ENCODE measurements at regions of chr14 and their contacts with region 1.

Region 1: GRCh38 chr14:22570132-22570949 is 18.7 kb downstream of the DAD1 start:
- DNase-seq: peak; percentile 91
- H3K4me3 Mint-ChIP-seq: peak overlapping the region; percentile 80
- H3K27ac Mint-ChIP-seq: peak overlapping the region; percentile 99
- H3K4me1 Mint-ChIP-seq: peaks cover 74% of the 10 kb centered on the region
- H3K27me3 Mint-ChIP-seq: no peaks in the 10 kb centered on the region

Region 2: GRCh38 chr14:21964180-21964579 is 606.2 kb before region 1 on chr14:
- CTCF ChIA-PET with region 1: interaction called, 10 read pairs
- POLR2A ChIA-PET with region 1: no interaction called
- intact Hi-C with region 1: no loop called
- DNase-seq: no peak
- H3K4me3 Mint-ChIP-seq: no peak overlapping the region
- H3K27ac Mint-ChIP-seq: peak overlapping the region; percentile 4
- H3K4me1 Mint-ChIP-seq: peaks cover 17% of the 10 kb centered on the region
- H3K27me3 Mint-ChIP-seq: no peaks in the 10 kb centered on the region

Region 3: DNA sequence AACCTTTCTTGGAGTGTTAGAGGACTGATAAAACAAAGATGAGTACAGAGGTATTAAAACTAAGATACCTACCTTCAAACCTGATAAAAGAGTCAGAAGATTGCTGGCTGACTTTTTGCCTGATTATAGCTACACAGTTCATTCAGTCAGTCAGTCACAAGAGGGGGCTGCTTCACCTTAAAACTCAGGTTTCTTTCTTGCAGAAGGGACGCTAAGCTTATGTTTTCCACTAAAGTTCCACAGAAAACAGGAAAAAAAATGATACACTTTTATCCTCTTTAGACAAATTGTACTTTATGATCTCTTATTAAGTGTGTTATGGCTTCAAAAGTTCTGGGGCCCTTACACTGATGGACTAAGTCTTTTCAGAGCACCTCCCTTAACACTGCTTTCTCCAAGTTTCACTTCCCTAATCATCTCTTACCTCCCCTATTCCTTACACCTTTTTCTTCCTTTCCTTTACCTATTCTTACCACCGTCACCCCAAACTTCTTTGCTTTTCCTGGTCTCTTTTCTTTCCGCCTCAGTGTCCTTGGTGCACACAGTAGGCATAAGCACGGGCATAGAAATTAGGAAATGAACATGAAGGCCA is 448.0 kb before region 1 on chr14:
- CTCF ChIA-PET with region 1: interaction called, 11 read pairs
- POLR2A ChIA-PET with region 1: interaction called, 4 read pairs
- intact Hi-C with region 1: no loop called
- DNase-seq: no peak
- H3K4me3 Mint-ChIP-seq: peak overlapping the region; percentile 62
- H3K27ac Mint-ChIP-seq: peak overlapping the region; percentile 89
- H3K4me1 Mint-ChIP-seq: peaks cover 9% of the 10 kb centered on the region
- H3K27me3 Mint-ChIP-seq: no peaks in the 10 kb centered on the region

Region 4: GRCh38 chr14:22531451-22532344 is 38.6 kb before region 1 on chr14:
- CTCF ChIA-PET with region 1: interaction called, 24 read pairs
- POLR2A ChIA-PET with region 1: interaction called, 98 read pairs
- intact Hi-C with region 1: no loop called
- DNase-seq: peak; percentile 66
- H3K4me3 Mint-ChIP-seq: peak overlapping the region; percentile 74
- H3K27ac Mint-ChIP-seq: peak overlapping the region; percentile 99
- H3K4me1 Mint-ChIP-seq: peaks cover 88% of the 10 kb centered on the region
- H3K27me3 Mint-ChIP-seq: no peaks in the 10 kb centered on the region

Region 5: DNA sequence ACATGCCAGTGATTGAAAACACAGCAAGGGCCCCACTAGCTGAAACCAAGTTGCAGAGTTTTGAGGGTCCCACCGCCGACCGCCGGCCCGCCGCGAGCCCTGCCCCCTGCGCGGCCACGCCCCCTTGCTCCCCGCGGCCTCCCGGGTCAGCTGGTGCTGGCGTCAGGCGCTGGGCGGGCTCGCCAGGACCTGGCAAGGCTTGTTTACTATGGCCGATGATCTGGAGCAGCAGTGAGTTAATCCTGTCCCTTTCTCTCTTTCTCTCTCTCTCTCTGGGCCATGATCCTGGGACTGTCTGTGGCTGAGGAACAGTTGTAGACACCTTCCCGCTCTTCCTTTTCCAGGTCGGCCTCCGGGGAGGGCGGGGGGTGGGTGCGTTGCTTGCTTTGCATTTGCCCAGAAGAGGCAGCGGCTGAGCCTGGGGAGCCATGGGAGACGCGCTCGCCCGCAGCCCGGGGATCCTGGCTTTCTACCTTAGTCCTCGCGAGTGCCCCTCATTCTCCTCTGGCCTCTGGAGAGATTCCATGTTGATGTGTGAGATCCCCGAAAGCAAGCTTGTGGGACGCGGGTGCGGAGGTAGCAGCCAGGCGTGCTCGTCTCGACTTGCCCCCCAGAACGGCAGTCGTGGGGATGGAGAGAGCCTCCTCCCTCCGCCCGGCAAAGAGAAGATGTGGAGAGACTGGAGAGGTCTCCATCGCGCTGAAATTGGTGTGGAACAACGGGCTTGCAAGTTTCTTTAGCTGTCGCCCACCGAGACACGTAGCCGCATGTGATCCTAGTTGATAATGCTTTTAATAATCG is 28.0 kb after region 1 on chr14 and contains the start of gene ABHD4:
- CTCF ChIA-PET with region 1: interaction called, 51 read pairs
- POLR2A ChIA-PET with region 1: interaction called, 4 read pairs
- intact Hi-C with region 1: no loop called
- DNase-seq: peak; percentile 77
- H3K4me3 Mint-ChIP-seq: peak within 1 kb of the TSS; percentile 91
- H3K27ac Mint-ChIP-seq: peak within 1 kb of the TSS; percentile 71
- H3K4me1 Mint-ChIP-seq: peaks cover 34% of the 10 kb centered on the region
- H3K27me3 Mint-ChIP-seq: no peaks in the 10 kb centered on the region
- total RNA-seq, gene ABHD4: 10.0 to 13.6 TPM

Region 6: DNA sequence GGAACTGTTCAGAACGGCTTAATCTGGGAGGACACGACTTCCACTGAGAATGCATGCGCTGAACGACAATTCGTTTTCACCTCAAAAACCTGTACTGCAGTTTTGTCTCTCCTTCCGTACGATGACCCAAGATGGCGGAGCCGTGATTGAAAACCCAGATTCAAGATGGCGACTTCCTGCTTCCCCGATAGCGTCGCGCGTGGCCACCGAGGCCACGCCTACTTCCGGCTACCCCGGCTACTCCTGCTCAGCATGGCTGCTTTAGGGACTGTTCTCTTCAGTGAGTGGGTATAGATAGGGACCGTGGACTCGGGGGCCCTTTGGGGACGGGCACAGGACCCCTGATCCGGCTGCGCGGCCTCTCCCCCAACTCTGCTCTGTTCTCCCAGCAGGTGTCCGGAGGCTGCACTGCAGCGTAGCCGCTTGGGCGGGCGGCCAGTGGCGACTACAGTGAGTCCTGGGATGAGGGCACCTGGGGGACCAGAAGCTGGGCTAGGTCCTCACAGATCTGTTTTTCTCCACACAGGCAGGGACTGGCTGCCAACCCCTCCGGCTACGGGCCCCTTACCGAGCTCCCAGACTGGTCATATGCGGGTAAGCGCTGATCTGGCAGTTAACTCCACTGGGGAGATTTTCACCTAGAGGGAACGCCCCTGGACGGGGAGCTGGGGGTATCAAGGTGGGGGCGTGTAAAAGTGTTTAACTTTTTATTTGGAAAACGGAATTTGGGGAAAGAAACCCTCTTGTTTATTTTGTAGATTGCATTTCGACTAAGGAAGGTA is 259.5 kb after region 1 on chr14 and contains the start of gene MRPL52:
- CTCF ChIA-PET with region 1: interaction called, 27 read pairs
- POLR2A ChIA-PET with region 1: no interaction called
- intact Hi-C with region 1: no loop called
- DNase-seq: peak; percentile 94
- H3K4me3 Mint-ChIP-seq: peak within 1 kb of the TSS; percentile 95
- H3K27ac Mint-ChIP-seq: peak within 1 kb of the TSS; percentile 95
- H3K4me1 Mint-ChIP-seq: peaks cover 26% of the 10 kb centered on the region
- H3K27me3 Mint-ChIP-seq: peaks cover 2% of the 10 kb centered on the region
- total RNA-seq, gene MRPL52: 152 to 156 TPM

Region 7: GRCh38 chr14:22986508-22987054 is 416.2 kb after region 1 on chr14:
- CTCF ChIA-PET with region 1: interaction called, 13 read pairs
- POLR2A ChIA-PET with region 1: no interaction called
- intact Hi-C with region 1: loop called (anchors 1 kb)
- DNase-seq: peak; percentile 92
- H3K4me3 Mint-ChIP-seq: no peak overlapping the region
- H3K27ac Mint-ChIP-seq: no peak overlapping the region
- H3K4me1 Mint-ChIP-seq: no peaks in the 10 kb centered on the region
- H3K27me3 Mint-ChIP-seq: no peaks in the 10 kb centered on the region

Measured in activated CD4-positive, alpha-beta memory T cell treated with anti-CD3 and anti-CD28 coated beads for 36 hours (primary cell).